ENCODE measurements at regions of chr10 and their contacts with region 1.

Region 1: DNA sequence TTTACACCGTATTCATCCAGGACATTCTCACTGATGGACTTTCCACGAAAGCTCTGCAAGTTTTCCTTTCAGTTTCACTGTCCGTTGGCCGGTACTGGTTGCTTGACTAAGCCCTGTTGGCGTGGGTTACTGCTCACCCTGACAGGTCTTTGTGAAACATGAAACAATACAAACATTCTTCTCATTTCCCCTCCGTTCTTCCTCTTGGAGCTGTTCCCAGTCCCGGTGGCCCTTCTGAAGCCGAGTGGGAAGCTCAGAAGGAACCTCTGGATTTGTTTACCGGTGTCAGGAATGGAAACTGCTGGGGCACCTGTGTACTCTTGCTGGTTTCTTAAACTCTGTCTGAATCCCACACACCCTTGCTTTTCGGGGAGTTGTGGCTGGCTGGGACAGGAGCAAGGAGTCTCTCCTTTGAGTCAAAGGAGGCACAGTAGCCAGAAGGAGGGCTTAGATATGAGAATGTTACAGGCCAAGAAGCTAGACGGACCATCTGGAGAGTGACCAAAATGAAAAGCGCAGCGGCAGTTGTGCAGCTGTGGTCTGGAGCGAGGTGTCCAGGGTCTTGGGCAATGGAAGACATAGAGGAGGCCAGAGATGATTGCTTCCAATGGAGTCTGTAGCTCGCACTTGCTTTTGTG is 45.7 kb downstream of the LYZL2 start:
- DNase-seq: peak; percentile 21
- ATAC-seq: no peak
- H3K4me3 Mint-ChIP-seq: no peak overlapping the region
- H3K27ac Mint-ChIP-seq: no peak overlapping the region
- H3K4me1 Mint-ChIP-seq: peaks cover 3% of the 10 kb centered on the region
- H3K27me3 Mint-ChIP-seq: no peaks in the 10 kb centered on the region

Region 2: GRCh38 chr10:30170824-30171223 is 413.1 kb before region 1 on chr10:
- CTCF ChIA-PET with region 1: no interaction called
- POLR2A ChIA-PET with region 1: no interaction called
- intact Hi-C with region 1: no loop called
- DNase-seq: no peak
- ATAC-seq: no peak
- H3K4me3 Mint-ChIP-seq: no peak overlapping the region
- H3K27ac Mint-ChIP-seq: no peak overlapping the region
- H3K4me1 Mint-ChIP-seq: no peaks in the 10 kb centered on the region
- H3K27me3 Mint-ChIP-seq: peaks cover 21% of the 10 kb centered on the region

Region 3: DNA sequence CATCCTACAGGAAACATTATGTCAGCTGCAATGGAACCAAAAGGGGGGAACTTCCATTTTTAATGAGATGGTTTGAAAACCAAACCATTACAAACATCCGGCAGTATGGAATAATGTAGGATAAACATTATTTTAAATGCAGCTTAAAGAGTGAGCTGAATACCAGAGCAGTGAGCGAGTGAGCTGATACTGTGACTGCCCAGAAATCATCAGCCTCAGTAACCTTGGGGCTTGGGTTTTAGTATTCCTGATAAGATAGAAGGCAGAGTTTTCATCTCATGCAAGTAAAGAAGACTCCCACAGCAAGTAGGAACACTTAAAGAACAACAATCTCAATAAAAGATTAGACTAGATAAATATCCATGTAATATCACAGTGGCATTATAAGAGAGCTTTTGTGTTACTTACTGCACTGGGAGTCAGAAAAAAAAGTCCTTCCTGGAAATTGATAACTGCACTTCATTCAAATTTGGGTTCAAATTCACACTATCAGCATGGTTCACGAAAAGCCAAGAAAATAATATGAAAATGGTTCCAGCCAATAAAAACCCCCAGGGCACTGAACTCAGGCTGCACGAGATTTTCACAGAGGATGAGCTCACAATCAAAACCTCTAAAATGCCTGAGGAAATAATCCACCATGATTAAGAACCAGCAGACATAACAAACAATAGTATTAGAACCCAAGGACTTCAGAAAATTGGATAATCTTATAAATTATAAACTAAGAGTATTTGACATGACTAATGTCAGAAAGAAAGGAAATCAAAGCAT is 350.5 kb before region 1 on chr10:
- CTCF ChIA-PET with region 1: no interaction called
- POLR2A ChIA-PET with region 1: no interaction called
- intact Hi-C with region 1: no loop called
- DNase-seq: no peak
- ATAC-seq: no peak
- H3K4me3 Mint-ChIP-seq: no peak overlapping the region
- H3K27ac Mint-ChIP-seq: no peak overlapping the region
- H3K4me1 Mint-ChIP-seq: peaks cover 7% of the 10 kb centered on the region
- H3K27me3 Mint-ChIP-seq: peaks cover 10% of the 10 kb centered on the region

Region 4: GRCh38 chr10:30392564-30392990 is 191.3 kb before region 1 on chr10:
- CTCF ChIA-PET with region 1: interaction called, 6 read pairs
- POLR2A ChIA-PET with region 1: no interaction called
- intact Hi-C with region 1: loop called in 1 of 2 experiments (anchors 2 kb)
- DNase-seq: peak; percentile 87
- ATAC-seq: peak; percentile 100
- H3K4me3 Mint-ChIP-seq: no peak overlapping the region
- H3K27ac Mint-ChIP-seq: no peak overlapping the region
- H3K4me1 Mint-ChIP-seq: peaks cover 3% of the 10 kb centered on the region
- H3K27me3 Mint-ChIP-seq: peaks cover 19% of the 10 kb centered on the region

Region 5: DNA sequence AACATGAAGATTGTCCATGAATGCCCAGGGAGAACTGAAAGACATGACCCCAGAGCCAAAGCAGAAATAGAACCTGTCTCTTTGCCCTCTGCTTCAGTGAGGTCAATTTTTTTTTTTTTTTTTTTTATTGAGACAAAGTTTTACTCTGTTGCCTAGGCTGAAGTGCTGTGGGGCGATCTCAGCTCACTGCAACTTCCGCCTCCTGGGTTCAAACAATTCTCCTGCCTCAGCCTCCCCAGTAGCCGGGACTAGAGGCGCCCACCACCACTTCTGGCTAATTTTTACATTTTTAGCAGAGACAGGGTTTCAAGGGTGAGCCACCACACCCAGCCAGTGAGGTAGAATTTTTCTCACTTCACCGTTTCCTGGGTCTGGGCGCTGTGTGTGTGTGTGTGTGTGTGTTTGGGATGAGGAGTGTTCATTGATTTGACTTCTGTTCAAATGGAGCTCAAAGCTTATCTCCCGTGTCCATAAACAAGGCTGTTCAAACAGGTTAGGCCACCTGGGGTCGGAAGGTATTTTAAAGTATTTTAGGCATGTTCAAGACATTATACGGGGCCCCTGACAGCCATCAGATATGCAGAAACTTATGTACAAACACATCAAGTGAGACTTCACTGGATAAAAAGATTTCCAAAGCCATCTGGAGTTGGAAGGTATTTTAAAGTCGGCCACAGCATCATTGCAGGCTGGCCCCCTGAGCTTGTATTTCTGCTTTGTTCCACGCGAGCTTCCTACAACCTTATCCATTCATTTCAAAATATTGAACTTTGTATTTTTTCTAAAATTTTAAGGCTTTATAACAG is 56.1 kb before region 1 on chr10:
- CTCF ChIA-PET with region 1: no interaction called
- POLR2A ChIA-PET with region 1: no interaction called
- intact Hi-C with region 1: no loop called
- DNase-seq: no peak
- ATAC-seq: no peak
- H3K4me3 Mint-ChIP-seq: no peak overlapping the region
- H3K27ac Mint-ChIP-seq: peak overlapping the region; percentile 55
- H3K4me1 Mint-ChIP-seq: peaks cover 58% of the 10 kb centered on the region
- H3K27me3 Mint-ChIP-seq: no peaks in the 10 kb centered on the region

Region 6: DNA sequence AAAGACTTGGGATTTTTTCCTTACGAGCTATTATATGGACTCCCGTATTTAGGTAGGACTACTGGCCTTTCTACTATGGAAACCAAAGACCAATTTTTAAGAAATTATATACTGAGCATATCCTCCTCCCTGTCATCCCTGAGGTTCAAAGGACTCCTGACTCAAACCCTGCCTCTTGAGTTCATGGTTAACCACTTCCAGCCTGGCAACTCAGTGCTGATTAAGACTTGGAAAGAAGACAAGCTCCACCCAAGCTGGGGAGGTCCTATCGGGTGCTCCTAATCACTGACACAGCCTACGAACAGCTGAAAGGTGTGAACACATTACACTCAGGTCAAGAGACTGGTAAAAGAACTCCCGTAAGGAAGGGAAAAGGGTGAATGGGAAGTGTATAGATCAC is 21.1 kb before region 1 on chr10:
- CTCF ChIA-PET with region 1: interaction called, 27 read pairs
- POLR2A ChIA-PET with region 1: no interaction called
- intact Hi-C with region 1: no loop called
- DNase-seq: peak; percentile 70
- ATAC-seq: peak; percentile 97
- H3K4me3 Mint-ChIP-seq: no peak overlapping the region
- H3K27ac Mint-ChIP-seq: no peak overlapping the region
- H3K4me1 Mint-ChIP-seq: peaks cover 4% of the 10 kb centered on the region
- H3K27me3 Mint-ChIP-seq: peaks cover 6% of the 10 kb centered on the region

Region 7: DNA sequence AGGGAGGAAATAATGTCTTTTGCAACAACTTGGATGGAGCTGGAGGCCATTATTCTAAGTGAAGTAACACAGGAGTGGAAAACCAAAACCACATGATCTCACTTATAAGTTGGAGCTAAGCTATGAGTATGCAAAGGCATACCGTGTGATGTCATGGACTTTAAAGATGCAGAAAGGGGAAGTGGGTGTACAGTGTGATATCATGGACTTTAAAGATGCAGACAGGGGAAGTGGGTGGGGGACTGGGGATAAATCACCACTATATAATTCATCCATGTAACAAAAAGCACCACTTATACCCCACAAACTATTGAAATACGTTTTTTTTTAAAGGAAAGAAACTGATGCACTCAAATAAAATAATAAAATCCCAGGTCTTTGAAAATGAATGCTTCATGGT is 16.1 kb after region 1 on chr10:
- CTCF ChIA-PET with region 1: interaction called, 12 read pairs
- POLR2A ChIA-PET with region 1: no interaction called
- intact Hi-C with region 1: no loop called
- DNase-seq: no peak
- ATAC-seq: peak; percentile 53
- H3K4me3 Mint-ChIP-seq: no peak overlapping the region
- H3K27ac Mint-ChIP-seq: no peak overlapping the region
- H3K4me1 Mint-ChIP-seq: no peaks in the 10 kb centered on the region
- H3K27me3 Mint-ChIP-seq: peaks cover 2% of the 10 kb centered on the region

Region 8: GRCh38 chr10:30812018-30812851 is 228.3 kb after region 1 on chr10:
- CTCF ChIA-PET with region 1: no interaction called
- POLR2A ChIA-PET with region 1: no interaction called
- intact Hi-C with region 1: no loop called
- DNase-seq: peak; percentile 17
- ATAC-seq: peak; percentile 39
- H3K4me3 Mint-ChIP-seq: no peak overlapping the region
- H3K27ac Mint-ChIP-seq: peak overlapping the region; percentile 34
- H3K4me1 Mint-ChIP-seq: peaks cover 25% of the 10 kb centered on the region
- H3K27me3 Mint-ChIP-seq: no peaks in the 10 kb centered on the region

Measured in activated CD4-positive, alpha-beta T cell treated with anti-CD3 and anti-CD28 coated beads for 36 hours (primary cell).